ENCODE measurements at regions of chr6 and their contacts with region 1.

Region 1: DNA sequence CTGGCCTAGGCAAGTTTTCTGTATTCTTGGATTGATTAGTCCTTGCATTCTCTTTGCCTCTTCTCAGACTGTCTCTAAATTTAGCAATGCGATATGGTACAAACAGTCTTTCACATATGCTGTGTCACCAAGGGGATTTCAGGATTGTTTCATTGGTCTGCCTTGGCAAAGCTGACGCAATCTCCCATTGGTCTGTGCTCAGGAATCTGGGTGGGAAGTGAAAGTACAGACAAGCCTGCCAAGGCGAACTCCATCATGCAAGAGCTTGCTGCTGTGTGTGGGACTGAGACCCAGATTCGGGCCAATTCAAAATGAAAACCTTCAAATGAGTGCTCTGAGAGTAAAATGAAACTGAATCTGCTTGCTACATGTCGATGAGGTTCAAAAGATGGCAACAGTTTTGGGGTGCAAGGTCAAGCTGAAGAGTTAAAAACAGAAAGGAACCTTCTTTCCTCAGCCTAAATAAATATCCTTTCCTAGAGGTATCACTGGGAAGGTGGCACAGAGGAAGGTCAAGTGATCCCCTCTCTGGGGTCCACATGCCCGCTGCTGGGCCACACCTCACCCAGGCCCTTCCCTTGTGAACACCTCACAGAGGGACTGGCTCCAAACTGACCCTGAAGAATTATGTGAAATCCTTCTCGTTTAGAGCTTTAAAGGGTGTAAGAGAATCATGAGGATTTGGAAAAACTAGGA is 198.8 kb upstream of the PREP start:
- DNase-seq: peak; percentile 100
- H3K4me3 ChIP-seq: no peak overlapping the region
- H3K27ac ChIP-seq: peak overlapping the region; percentile 100
- H3K4me1 ChIP-seq: peaks cover 39% of the 10 kb centered on the region
- H3K27me3 ChIP-seq: no peaks in the 10 kb centered on the region
- CTCF ChIP-seq: no peak

Region 2: GRCh38 chr6:105431226-105431625 is 170.5 kb before region 1 on chr6:
- CTCF ChIA-PET with region 1: no interaction called
- dilution Hi-C with region 1: no loop called
- in situ Hi-C with region 1: no loop called
- intact Hi-C with region 1: loop called (anchors 1 kb)
- DNase-seq: peak; percentile 46
- H3K4me3 ChIP-seq: no peak overlapping the region
- H3K27ac ChIP-seq: no peak overlapping the region
- H3K4me1 ChIP-seq: peaks cover 35% of the 10 kb centered on the region
- H3K27me3 ChIP-seq: no peaks in the 10 kb centered on the region
- CTCF ChIP-seq: peak; percentile 57

Region 3: DNA sequence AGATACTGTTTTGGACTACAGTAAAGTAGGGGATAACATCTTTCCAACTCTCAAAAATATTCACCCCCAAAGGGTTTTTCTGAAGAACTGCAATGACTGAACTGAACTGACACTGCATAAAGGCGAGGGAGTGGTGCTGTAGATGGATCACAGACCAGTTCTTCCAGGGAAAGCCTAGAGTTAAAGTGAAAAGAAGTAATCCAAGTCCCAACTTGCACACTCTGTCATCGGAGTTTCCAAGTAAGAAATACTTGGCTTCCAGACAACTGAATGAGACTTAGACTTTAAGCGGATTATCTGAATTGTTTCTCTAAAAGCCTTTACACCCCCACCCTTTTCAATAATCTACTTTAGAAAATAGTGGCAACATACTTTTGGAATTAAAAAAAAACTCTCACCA is 64.7 kb before region 1 on chr6:
- CTCF ChIA-PET with region 1: no interaction called
- dilution Hi-C with region 1: no loop called
- in situ Hi-C with region 1: no loop called
- intact Hi-C with region 1: loop called (anchors 2 kb)
- DNase-seq: peak; percentile 96
- H3K4me3 ChIP-seq: no peak overlapping the region
- H3K27ac ChIP-seq: peak overlapping the region; percentile 96
- H3K4me1 ChIP-seq: peaks cover 19% of the 10 kb centered on the region
- H3K27me3 ChIP-seq: no peaks in the 10 kb centered on the region
- CTCF ChIP-seq: peak in 1 of 2 donors; percentile 10

Region 4: GRCh38 chr6:105769987-105770386 is 168.3 kb after region 1 on chr6:
- CTCF ChIA-PET with region 1: no interaction called
- dilution Hi-C with region 1: loop called (anchors 5 kb)
- in situ Hi-C with region 1: no loop called
- intact Hi-C with region 1: no loop called
- DNase-seq: peak; percentile 81
- H3K4me3 ChIP-seq: no peak overlapping the region
- H3K27ac ChIP-seq: peak overlapping the region; percentile 43
- H3K4me1 ChIP-seq: peaks cover 28% of the 10 kb centered on the region
- H3K27me3 ChIP-seq: no peaks in the 10 kb centered on the region
- CTCF ChIP-seq: peak in 1 of 2 donors; percentile 19

Region 5: DNA sequence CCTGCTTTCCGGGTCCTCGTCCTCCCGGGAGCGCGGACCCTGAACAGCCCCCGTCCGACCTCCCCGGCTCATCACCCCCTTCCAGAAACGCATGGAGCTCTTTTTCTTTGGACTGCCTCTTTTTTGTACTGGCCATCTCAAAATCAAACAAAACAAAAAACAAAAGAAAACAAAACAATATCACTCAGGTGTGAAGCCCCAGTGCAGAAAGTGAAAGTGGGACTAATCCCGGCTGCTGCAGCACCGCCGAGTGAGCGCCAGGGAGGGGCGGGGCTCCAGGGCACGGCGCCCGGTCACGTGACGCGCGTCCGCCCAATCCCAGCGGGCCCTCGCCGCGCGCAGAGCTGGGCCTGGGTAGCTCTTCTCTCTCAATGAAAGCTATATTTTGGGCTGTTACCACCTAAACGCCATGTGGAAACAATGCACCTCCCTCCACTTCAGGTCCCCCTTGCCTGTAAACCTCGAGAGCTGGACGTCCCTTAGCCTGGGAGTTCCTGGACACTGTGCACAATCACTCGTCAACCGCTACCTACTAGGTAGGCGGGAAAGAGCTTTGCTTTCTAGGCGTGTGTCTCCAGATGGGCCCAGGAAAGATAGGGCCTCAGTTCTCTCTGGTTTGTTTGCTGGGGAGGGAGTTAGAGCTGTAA is 390.7 kb after region 1 on chr6:
- CTCF ChIA-PET with region 1: no interaction called
- dilution Hi-C with region 1: no loop called
- in situ Hi-C with region 1: no loop called
- intact Hi-C with region 1: loop called (anchors 5 kb)
- DNase-seq: peak; percentile 67
- H3K4me3 ChIP-seq: peak overlapping the region; percentile 61 to 76 (median 62)
- H3K27ac ChIP-seq: peak overlapping the region; percentile 67
- H3K4me1 ChIP-seq: peaks cover 25% of the 10 kb centered on the region
- H3K27me3 ChIP-seq: no peaks in the 10 kb centered on the region
- CTCF ChIP-seq: no peak